ENCODE measurements at regions of chr7 and their contacts with region 1.

Region 1: GRCh38 chr7:142626420-142627035 is 122.7 kb upstream of the PRSS1 start:
- DNase-seq: peak; percentile 73
- H3K4me3 ChIP-seq: no peak overlapping the region
- H3K27ac ChIP-seq: no peak overlapping the region
- H3K4me1 ChIP-seq: no peaks in the 10 kb centered on the region
- H3K27me3 ChIP-seq: peaks cover 0 to 14% (median 0%) of the 10 kb centered on the region in 7 donors
- CTCF ChIP-seq: peak in 10 of 11 experiments; percentile 16 to 74 (median 58)
- POLR2A ChIP-seq: no peak

Region 2: GRCh38 chr7:142535123-142535779 is 91.3 kb before region 1 on chr7:
- intact Hi-C with region 1: no loop called
- DNase-seq: no peak
- H3K4me3 ChIP-seq: peak overlapping the region in 1 of 8 donors; percentile 30
- H3K27ac ChIP-seq: peak overlapping the region in 2 of 8 donors; percentile 22 to 31
- H3K4me1 ChIP-seq: peaks cover 0 to 13% (median 9%) of the 10 kb centered on the region in 6 donors
- H3K27me3 ChIP-seq: peaks cover 0 to 7% (median 0%) of the 10 kb centered on the region in 7 donors
- CTCF ChIP-seq: peak in 9 of 11 experiments; percentile 25 to 70 (median 47)
- POLR2A ChIP-seq: no peak

Region 3: GRCh38 chr7:142771353-142771723 is 144.8 kb after region 1 on chr7:
- intact Hi-C with region 1: loop called (anchors 10 kb)
- DNase-seq: no peak
- H3K4me3 ChIP-seq: no peak overlapping the region
- H3K27ac ChIP-seq: no peak overlapping the region
- H3K4me1 ChIP-seq: peaks cover 0 to 12% (median 0%) of the 10 kb centered on the region in 6 donors
- H3K27me3 ChIP-seq: no peaks in the 10 kb centered on the region
- CTCF ChIP-seq: no peak
- POLR2A ChIP-seq: no peak

Region 4: GRCh38 chr7:142908921-142909890 is 282.7 kb after region 1 on chr7:
- intact Hi-C with region 1: no loop called
- DNase-seq: no peak
- H3K4me3 ChIP-seq: no peak overlapping the region
- H3K27ac ChIP-seq: peak overlapping the region in 1 of 8 donors; percentile 46
- H3K4me1 ChIP-seq: peaks cover 0 to 18% (median 0%) of the 10 kb centered on the region in 6 donors
- H3K27me3 ChIP-seq: peaks cover 0 to 10% (median 0%) of the 10 kb centered on the region in 7 donors
- CTCF ChIP-seq: peak in 6 of 11 experiments; percentile 19 to 60 (median 41)
- POLR2A ChIP-seq: no peak

Measured in spleen (tissue), 13 donors.